ENCODE measurements at regions of chr6 and their contacts with region 1.

Region 1: DNA sequence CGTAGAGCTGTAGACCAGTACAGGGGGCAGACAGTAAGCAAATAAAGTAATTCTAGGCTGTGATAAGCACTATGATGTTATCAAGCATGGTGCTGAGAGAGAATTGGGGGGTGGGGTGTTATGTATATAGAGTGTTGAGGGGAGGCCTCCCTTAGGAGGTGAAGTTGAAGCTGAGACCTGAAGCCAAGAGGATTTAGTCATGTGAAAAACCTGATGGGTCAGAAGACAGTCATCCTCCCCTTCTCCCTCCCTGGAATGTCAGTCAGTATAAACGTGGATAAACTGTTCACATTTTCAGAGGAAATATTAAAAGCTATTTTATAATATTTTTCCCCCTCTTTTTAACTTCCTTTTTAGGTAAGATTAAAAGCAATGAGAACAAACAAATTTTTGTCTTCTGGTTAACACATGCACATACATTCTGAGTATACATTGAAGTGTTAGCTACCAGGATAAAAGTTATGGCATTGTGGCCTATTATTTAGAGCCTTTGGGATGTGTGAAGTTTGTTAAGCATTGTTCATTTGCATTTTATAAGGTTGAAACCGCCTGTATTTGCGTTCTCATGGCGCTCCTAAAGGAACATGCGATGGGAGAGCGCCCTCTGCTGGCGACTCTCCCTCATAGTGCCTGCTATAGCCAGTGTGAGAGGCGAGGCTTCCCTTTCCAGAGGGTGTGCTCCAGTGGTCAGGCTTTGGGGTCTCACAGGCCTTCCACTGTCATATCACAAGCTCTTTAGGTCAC is 35.4 kb upstream of the MAPK13 start:
- DNase-seq: peak; percentile 81 to 82
- H3K4me3 ChIP-seq: no peak overlapping the region
- H3K27ac ChIP-seq: peak overlapping the region; percentile 41 to 65
- H3K4me1 ChIP-seq: peaks cover 0 to 5% of the 10 kb centered on the region in 2 donors
- H3K27me3 ChIP-seq: no peaks in the 10 kb centered on the region
- CTCF ChIP-seq: peak; percentile 94 to 96 (median 94)
- POLR2A ChIP-seq: no peak

Region 2: GRCh38 chr6:35402136-35402855 is 692.6 kb before region 1 on chr6:
- intact Hi-C with region 1: no loop called
- DNase-seq: no peak
- H3K4me3 ChIP-seq: no peak overlapping the region
- H3K27ac ChIP-seq: no peak overlapping the region
- H3K4me1 ChIP-seq: no peaks in the 10 kb centered on the region
- H3K27me3 ChIP-seq: no peaks in the 10 kb centered on the region
- CTCF ChIP-seq: no peak
- POLR2A ChIP-seq: no peak

Region 3: DNA sequence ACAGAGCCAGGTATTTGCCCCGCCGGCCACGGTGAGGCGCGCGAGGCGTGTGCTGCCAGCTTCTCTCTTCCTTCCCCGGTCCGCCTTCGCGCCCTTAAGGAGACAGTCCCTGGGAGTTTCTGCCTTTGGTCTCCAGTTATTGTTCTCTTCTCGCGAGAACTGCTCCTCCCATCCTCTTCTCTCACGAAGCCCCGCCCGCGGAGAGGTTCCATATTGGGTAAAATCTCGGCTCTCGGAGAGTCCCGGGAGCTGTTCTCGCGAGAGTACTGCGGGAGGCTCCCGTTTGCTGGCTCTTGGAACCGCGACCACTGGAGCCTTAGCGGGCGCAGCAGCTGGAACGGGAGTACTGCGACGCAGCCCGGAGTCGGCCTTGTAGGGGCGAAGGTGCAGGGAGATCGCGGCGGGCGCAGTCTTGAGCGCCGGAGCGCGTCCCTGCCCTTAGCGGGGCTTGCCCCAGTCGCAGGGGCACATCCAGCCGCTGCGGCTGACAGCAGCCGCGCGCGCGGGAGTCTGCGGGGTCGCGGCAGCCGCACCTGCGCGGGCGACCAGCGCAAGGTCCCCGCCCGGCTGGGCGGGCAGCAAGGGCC is 67.3 kb before region 1 on chr6 and contains the start of gene MAPK14:
- intact Hi-C with region 1: loop called (anchors 5 kb)
- DNase-seq: peak; percentile 99 to 100
- H3K4me3 ChIP-seq: peak within 1 kb of the TSS; percentile 55 to 91
- H3K27ac ChIP-seq: peak within 1 kb of the TSS; percentile 86 to 94
- H3K4me1 ChIP-seq: peaks cover 4 to 9% of the 10 kb centered on the region in 2 donors
- H3K27me3 ChIP-seq: no peaks in the 10 kb centered on the region
- CTCF ChIP-seq: peak; percentile 93 to 98 (median 97)
- POLR2A ChIP-seq: peak; percentile 93 to 94
- total RNA-seq, gene MAPK14: 62.0 to 117 (median 86.2) TPM